ENCODE measurements at regions of chr21 and their contacts with region 1.

Region 1: GRCh38 chr21:39675993-39676661 is 63.4 kb downstream of the B3GALT5 start:
- DNase-seq: no peak
- ATAC-seq: peak; percentile 75 to 95

Region 2: GRCh38 chr21:39153373-39153772 is 522.8 kb before region 1 on chr21:
- intact Hi-C with region 1: no loop called
- DNase-seq: no peak
- ATAC-seq: peak in 1 of 2 donors; percentile 53

Region 3: GRCh38 chr21:39625211-39625895 is 50.8 kb before region 1 on chr21:
- intact Hi-C with region 1: loop called in 1 of 2 experiments (anchors 10 kb)
- DNase-seq: no peak
- ATAC-seq: no peak

Region 4: DNA sequence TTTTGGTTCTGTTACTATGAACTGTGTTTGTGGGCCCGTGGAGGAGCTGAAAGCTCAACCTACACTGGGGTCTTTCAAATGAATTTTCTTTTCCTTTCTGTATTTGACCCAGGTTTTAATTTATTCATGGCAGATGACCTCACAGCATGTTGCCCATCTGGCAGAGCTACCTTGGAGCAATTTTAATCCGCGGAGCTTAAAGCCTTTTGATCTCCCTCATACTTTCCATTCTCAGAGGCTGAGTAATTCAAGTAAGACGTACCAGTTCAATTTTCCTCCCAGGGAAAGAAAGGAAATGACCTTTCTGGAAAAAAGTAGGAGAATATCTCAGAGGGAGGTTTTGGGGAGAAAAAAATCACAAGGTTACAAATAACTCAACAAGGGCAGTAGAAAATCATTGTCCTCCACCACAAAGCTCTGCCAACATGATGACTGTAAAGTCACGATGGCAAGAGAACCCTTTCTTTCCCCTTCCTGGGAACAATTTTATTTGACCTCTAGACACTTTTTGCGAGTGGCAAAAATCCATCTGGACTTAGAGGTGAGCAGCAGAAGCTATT is 169.5 kb after region 1 on chr21:
- intact Hi-C with region 1: no loop called
- DNase-seq: no peak
- ATAC-seq: peak in 1 of 2 donors; percentile 42